ENCODE measurements at regions of chr3 and their contacts with region 1.

Region 1: GRCh38 chr3:183766745-183767606 is 58.4 kb downstream of the MAP6D1 start:
- DNase-seq: peak; percentile 82 to 88 (median 84)
- ATAC-seq: peak; percentile 85
- H3K4me3 ChIP-seq: no peak overlapping the region
- H3K27ac ChIP-seq: no peak overlapping the region
- H3K4me1 ChIP-seq: peaks cover 10% of the 10 kb centered on the region
- H3K27me3 ChIP-seq: no peaks in the 10 kb centered on the region
- CTCF ChIP-seq: peak; percentile 47 to 90 (median 83)
- POLR2A ChIP-seq: no peak

Region 2: DNA sequence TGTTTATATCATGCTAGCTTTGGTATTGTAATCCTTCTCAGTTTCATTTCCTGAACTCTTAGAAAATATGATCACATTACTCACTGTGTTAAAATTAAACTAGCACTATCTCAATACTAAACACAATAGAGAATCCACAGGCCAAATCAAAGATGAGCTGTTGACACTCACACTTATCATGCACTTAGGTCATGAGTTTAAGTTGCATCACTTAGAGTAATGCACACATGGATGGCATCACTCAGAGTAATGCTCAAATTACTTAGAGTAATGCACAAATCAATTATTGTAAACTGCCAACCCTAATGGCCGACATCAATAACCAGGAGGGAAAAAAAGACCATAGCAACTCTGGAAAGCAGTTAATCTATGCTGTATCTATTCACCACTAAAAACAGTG is 298.6 kb before region 1 on chr3:
- intact Hi-C with region 1: loop called (anchors 5 kb)
- DNase-seq: no peak
- ATAC-seq: no peak
- H3K4me3 ChIP-seq: no peak overlapping the region
- H3K27ac ChIP-seq: no peak overlapping the region
- H3K4me1 ChIP-seq: peaks cover 19% of the 10 kb centered on the region
- H3K27me3 ChIP-seq: no peaks in the 10 kb centered on the region
- CTCF ChIP-seq: no peak
- POLR2A ChIP-seq: no peak

Measured in body of pancreas (tissue), 4 donors.